Calu3 (cell line): ENCODE measurements at regions of chr6 and their contacts with region 1.

Region 1: GRCh38 chr6:56875961-56876360 is 78.9 kb upstream of the BEND6 start:
- DNase-seq: no peak
- H3K4me3 Mint-ChIP-seq: no peak overlapping the region
- H3K27ac Mint-ChIP-seq: no peak overlapping the region
- H3K4me1 Mint-ChIP-seq: peaks cover 17% of the 10 kb centered on the region
- H3K27me3 Mint-ChIP-seq: no peaks in the 10 kb centered on the region
- CTCF ChIP-seq: no peak

Region 2: DNA sequence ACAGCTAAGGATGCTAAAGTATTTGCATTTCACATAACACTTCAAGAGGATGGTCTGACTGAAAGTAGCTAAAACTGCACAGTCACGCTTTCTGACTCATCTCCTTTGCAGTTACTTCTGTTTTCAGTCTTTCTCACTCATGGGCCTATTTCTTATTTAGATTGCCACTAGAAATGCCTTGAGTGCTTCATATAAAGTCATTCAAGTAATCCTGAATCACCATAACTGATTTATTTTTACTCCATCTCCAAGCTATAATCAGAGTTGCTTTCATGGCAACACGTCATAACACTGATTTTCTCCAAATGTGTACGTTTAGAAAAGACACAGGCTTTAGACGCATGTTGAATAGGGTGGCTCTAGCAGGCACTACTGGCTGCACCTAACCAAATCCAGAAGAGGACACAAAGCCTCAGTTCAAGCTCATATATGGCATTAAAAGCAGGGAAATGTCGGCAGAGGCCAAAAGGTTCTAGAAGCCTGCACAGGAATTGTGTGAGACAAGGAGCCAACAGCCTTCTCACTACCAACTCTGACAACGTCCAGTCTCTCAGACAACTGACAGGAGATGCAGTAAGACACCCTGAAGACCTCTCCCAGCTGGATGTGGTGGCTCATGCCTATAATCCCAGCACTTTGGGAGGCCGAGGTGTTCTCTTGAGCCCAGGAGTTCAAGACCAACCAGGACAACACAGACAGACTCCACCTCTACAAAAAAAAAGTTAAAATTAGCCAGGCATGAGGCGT is 14.9 kb after region 1 on chr6:
- CTCF ChIA-PET with region 1: no interaction called
- intact Hi-C with region 1: loop called (anchors 1 kb)
- DNase-seq: no peak
- H3K4me3 Mint-ChIP-seq: no peak overlapping the region
- H3K27ac Mint-ChIP-seq: no peak overlapping the region
- H3K4me1 Mint-ChIP-seq: peaks cover 27% of the 10 kb centered on the region
- H3K27me3 Mint-ChIP-seq: no peaks in the 10 kb centered on the region
- CTCF ChIP-seq: no peak